ENCODE measurements at regions of chr1 and their contacts with region 1.

Region 1: DNA sequence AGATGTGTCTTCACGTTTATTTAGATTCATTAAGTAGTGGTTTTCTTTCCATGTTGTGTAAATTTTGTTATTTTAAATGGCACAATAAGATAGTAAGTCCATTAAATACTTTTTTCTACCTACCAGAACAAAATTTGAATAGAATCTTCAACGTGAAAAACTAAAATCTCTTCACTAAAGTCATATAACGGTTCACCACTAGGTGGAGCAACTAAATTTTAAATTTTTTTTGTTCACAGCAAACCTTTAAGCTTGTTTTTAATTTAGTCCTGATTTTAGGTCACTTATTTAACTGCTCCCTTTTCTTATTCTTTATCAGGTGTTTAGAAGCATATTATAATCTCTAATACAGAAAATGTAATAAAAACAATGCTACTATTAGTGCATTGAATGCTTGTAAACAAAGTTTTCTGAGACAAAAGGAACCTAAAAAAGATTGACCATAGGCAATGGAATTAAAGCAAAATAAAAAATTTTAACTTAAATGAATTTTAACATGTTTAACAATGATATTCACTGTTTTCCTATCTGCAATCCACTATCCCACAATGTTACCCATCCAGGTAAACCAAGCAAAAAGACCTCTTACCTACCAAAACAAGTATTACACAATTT is 28.3 kb upstream of the PKN2 start:
- DNase-seq: no peak
- ATAC-seq: no peak
- H3K4me3 ChIP-seq: no peak overlapping the region
- H3K27ac ChIP-seq: no peak overlapping the region
- H3K4me1 ChIP-seq: peaks cover 5% of the 10 kb centered on the region
- H3K27me3 ChIP-seq: no peaks in the 10 kb centered on the region
- CTCF ChIP-seq: peak; percentile 26 to 52 (median 51); a peak in 4 of 6 replicates
- EP300 ChIP-seq: no peak
- POLR2A ChIP-seq: no peak
- RAD21 ChIP-seq: peak; percentile 47

Region 2: DNA sequence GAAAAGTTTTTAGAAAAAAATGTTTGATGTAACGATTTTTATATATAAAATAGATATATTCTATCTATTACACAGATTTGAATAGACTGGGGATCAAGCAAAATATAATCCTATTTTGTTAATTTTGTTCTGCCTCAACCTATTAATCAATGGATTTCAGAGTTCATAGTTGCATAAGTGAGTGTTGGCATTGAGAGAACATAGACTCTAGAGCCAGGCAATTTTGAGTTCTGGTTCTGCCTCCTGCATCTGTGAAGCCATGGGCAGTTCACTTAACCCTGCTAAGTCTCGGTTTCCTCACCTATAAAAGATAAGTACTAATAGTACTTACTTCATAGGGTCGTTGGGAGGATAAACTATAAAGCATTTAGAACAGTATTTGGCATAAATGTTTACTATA is 14.7 kb after region 1 on chr1:
- CTCF ChIA-PET with region 1: interaction called, 23 read pairs
- POLR2A ChIA-PET with region 1: no interaction called
- RAD21 ChIA-PET with region 1: interaction called, 4 read pairs
- SMC1A ChIA-PET with region 1: interaction called, 4 read pairs
- in situ Hi-C with region 1: no loop called
- intact Hi-C with region 1: no loop called
- DNase-seq: no peak
- ATAC-seq: no peak
- H3K4me3 ChIP-seq: no peak overlapping the region
- H3K27ac ChIP-seq: no peak overlapping the region
- H3K4me1 ChIP-seq: no peaks in the 10 kb centered on the region
- H3K27me3 ChIP-seq: no peaks in the 10 kb centered on the region
- CTCF ChIP-seq: no peak
- EP300 ChIP-seq: no peak
- POLR2A ChIP-seq: no peak
- RAD21 ChIP-seq: no peak

Region 3: GRCh38 chr1:88701275-88701674 is 45.5 kb after region 1 on chr1:
- CTCF ChIA-PET with region 1: interaction called, 15 read pairs
- POLR2A ChIA-PET with region 1: no interaction called
- RAD21 ChIA-PET with region 1: interaction called, 4 read pairs
- SMC1A ChIA-PET with region 1: interaction called, 5 read pairs
- in situ Hi-C with region 1: no loop called
- intact Hi-C with region 1: no loop called
- DNase-seq: no peak
- ATAC-seq: peak; percentile 86
- H3K4me3 ChIP-seq: no peak overlapping the region
- H3K27ac ChIP-seq: peak overlapping the region; percentile 59
- H3K4me1 ChIP-seq: peaks cover 17% of the 10 kb centered on the region
- H3K27me3 ChIP-seq: no peaks in the 10 kb centered on the region
- CTCF ChIP-seq: no peak
- EP300 ChIP-seq: no peak
- POLR2A ChIP-seq: no peak
- RAD21 ChIP-seq: no peak